Posterior vena cava (tissue), 2 donors: ENCODE measurements at regions of chr7 and their contacts with region 1.

Region 1: GRCh38 chr7:51237446-51238150 is 79.0 kb downstream of the COBL start:
- DNase-seq: no peak

Region 2: GRCh38 chr7:51210766-51211165 is 26.8 kb before region 1 on chr7:
- intact Hi-C with region 1: loop called in 1 of 2 experiments (anchors 1 kb)
- DNase-seq: no peak